Aorta (tissue), 5 donors: ENCODE measurements at regions of chr11 and their contacts with region 1.

Region 1: DNA sequence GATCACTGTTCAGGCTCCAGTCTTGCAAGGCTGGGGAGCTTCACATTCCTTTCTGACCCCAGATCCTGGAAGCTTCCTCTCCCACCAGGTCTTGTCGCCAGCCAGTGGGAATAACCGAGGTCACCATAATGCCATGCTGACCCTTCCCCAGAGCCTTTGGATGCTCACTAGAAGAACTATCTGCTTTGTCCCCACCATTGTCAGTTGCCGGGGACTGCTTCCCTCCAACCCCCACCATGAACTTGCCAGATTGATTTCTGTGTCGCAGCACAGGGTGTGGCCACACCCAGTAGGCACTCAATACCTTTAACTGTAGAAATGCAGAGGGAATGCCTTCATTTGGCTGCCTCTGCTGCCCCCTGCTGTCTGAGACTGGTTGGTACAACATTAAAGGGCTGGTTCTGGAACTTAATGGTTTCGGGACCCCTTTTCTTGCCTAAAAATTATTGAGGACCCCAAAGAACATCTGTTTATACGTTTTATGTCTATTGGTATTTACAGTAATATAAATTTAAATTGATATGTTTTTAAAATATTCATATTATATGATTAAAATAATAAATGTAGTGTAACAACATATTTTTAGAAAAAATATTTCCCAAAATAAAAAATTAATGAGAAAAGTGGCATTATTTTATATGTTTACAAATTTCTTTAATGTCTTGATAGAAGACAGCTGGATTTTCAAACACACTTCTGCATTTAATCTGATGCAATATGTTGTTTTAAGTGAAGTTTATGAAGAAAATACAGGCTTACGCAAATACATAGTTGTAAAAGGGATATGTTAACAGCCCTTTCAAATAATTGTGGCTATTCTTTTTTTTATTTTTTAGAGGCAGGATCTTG is 6.7 kb upstream of the GDPD5 start:
- DNase-seq: peak; percentile 78 to 89
- ATAC-seq: peak; percentile 84
- H3K4me3 ChIP-seq: no peak overlapping the region
- H3K27ac ChIP-seq: no peak overlapping the region
- H3K4me1 ChIP-seq: no peaks in the 10 kb centered on the region
- H3K27me3 ChIP-seq: no peaks in the 10 kb centered on the region

Region 2: DNA sequence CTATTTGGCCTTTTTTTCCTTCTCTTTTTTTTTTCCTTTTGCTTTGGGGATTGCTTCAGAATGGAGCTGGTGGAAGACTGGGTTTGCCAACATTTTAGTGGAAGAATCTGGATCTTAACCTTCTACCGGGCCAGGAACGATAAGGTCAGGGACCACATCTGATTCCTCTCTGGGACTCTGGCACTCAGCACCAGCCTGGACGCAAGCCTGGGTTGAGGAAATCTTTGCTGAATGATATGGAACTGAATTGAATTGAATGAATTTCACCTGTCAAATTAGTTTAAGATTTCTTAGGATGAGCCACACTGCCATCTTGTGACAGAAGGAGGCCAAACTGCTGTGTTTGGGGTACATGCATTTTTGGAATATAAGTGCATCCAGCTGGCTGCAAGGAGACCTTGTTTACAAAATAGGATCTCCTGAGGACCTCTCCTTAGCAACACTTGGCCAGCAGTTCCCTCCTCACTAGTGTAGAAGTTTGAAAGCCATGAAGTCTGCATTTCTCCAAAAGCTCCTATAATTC is 261.5 kb before region 1 on chr11:
- intact Hi-C with region 1: loop called in 1 of 2 experiments (anchors 10 kb)
- DNase-seq: peak in 1 of 2 donors; percentile 3
- ATAC-seq: no peak
- H3K4me3 ChIP-seq: no peak overlapping the region
- H3K27ac ChIP-seq: no peak overlapping the region
- H3K4me1 ChIP-seq: no peaks in the 10 kb centered on the region
- H3K27me3 ChIP-seq: no peaks in the 10 kb centered on the region

Region 3: GRCh38 chr11:75280227-75280701 is 252.2 kb before region 1 on chr11:
- intact Hi-C with region 1: loop called (anchors 10 kb)
- DNase-seq: peak; percentile 77 to 88
- ATAC-seq: peak; percentile 90
- H3K4me3 ChIP-seq: no peak overlapping the region
- H3K27ac ChIP-seq: no peak overlapping the region
- H3K4me1 ChIP-seq: no peaks in the 10 kb centered on the region
- H3K27me3 ChIP-seq: no peaks in the 10 kb centered on the region

Region 4: GRCh38 chr11:75388386-75389275 is 143.8 kb before region 1 on chr11:
- intact Hi-C with region 1: loop called (anchors 2 to 5 kb)
- DNase-seq: peak; percentile 76 to 88
- ATAC-seq: peak; percentile 90
- H3K4me3 ChIP-seq: no peak overlapping the region
- H3K27ac ChIP-seq: no peak overlapping the region
- H3K4me1 ChIP-seq: no peaks in the 10 kb centered on the region
- H3K27me3 ChIP-seq: no peaks in the 10 kb centered on the region

Region 5: GRCh38 chr11:75406338-75406777 is 126.1 kb before region 1 on chr11:
- intact Hi-C with region 1: loop called (anchors 5 kb)
- DNase-seq: no peak
- ATAC-seq: no peak
- H3K4me3 ChIP-seq: no peak overlapping the region
- H3K27ac ChIP-seq: no peak overlapping the region
- H3K4me1 ChIP-seq: no peaks in the 10 kb centered on the region
- H3K27me3 ChIP-seq: no peaks in the 10 kb centered on the region

Region 6: DNA sequence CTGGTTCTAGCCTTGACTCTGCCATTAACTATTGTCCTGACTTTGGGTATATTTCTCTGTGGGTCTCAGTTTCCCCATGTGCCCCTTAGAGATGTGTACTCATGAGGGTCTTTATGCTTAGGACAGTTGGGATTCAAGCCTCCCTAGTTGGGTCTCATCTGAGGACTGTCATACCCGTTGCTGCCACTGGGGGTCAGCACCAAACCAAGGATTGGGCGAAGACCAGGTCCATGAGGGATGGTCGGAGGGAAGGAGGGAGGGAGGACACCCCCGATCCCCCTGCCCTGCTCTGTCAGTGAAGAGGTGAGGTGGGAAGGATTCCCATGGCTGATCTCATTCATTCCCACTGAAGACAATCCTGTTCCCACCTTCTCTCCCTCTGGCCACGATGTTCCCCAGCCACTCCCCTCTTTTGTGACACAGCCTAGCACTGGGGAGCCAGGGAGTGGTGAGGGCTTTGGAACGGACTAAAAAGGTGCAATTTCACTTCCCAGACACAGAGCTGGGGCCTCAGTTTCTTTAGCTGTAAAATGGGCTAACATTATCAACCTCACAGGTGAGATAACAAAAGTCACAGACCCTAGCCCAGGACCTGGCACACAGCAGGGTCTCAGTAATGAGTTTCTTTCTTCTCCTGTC is 87.0 kb before region 1 on chr11:
- intact Hi-C with region 1: loop called (anchors 1 to 2 kb)
- DNase-seq: peak; percentile 75 to 92
- ATAC-seq: peak; percentile 80
- H3K4me3 ChIP-seq: no peak overlapping the region
- H3K27ac ChIP-seq: no peak overlapping the region
- H3K4me1 ChIP-seq: no peaks in the 10 kb centered on the region
- H3K27me3 ChIP-seq: no peaks in the 10 kb centered on the region

Region 7: DNA sequence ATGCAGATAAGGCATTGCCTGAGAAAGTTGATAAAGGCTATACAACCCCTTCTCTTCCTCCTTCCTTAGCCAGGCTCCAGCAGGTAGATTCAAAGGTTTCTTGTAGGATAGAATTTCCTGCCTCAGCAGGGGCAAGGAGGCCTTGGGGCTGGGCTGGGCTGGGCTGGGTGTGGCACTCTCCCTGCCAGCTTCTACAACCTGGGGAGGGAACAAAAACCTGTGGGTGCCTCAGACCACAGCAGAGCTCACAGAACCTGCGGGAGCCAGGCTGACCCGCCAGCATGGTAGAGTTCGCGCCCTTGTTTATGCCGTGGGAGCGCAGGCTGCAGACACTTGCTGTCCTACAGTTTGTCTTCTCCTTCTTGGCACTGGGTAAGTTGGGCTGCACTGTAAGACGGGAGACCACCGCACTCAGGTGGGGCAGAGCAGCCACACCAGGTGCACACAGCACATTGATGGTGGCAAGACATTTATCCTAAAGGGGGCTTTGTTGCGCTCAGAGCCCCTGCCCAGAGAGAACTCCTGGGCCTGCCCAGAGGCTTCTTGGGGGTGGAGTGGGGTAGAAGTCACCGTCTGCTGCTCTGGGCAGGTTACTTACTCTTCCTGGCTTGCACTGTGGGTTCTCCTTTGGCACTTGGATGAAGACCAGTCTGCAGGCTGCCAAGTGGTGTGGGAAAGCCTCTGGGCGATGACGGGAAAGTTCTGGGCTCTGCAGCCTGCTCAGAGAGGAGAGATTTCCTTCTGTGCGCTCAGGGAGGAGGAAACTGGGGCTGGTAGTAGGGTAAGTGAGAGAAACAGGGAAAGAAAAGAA is 185.4 kb after region 1 on chr11 and contains the start of gene MOGAT2:
- intact Hi-C with region 1: no loop called
- DNase-seq: no peak
- ATAC-seq: no peak
- H3K4me3 ChIP-seq: no peak within 1 kb of the TSS
- H3K27ac ChIP-seq: no peak within 1 kb of the TSS
- H3K4me1 ChIP-seq: no peaks in the 10 kb centered on the region
- H3K27me3 ChIP-seq: no peaks in the 10 kb centered on the region
- total RNA-seq, gene MOGAT2: not detected

Region 8: GRCh38 chr11:75896843-75897419 is 364.5 kb after region 1 on chr11:
- intact Hi-C with region 1: no loop called
- DNase-seq: no peak
- ATAC-seq: no peak
- H3K4me3 ChIP-seq: no peak overlapping the region
- H3K27ac ChIP-seq: no peak overlapping the region
- H3K4me1 ChIP-seq: no peaks in the 10 kb centered on the region
- H3K27me3 ChIP-seq: no peaks in the 10 kb centered on the region